CD4-positive, alpha-beta memory T cell (primary cell): ENCODE measurements at regions of chr5 and their contacts with region 1.

Region 1: DNA sequence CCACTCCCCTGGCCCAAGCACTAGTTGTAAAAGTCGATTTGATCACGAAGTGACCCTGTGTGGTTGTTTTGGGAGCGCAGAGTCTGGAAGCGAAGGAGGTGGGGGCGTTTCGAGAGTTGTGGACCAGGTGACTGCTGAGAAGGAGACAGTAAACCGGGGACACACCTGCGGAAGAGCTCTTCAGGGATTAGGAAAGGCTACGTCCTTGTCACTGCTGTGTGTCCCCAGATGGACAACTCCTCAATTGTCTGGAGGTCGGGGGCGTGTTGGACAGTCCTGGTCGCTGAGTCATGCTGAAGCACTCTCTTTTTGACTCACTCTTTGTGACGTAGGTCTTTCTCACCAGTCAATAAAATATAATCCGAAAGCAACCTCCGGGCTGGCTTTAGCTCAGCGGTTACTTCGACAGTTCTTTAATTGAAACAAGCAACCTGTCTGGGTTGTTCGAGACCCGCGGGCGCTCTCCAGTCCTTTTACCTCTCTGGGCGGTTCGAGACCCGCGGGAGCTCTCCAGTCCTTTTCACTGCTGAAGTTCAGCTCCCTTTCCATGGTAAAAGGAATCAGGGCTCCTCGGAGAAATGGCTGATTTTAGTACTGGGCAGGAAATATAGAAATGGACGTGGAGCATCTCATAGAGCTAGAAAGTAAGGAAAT is 10.8 kb downstream of the ZMAT2 start:
- DNase-seq: peak; percentile 86 to 95 (median 93)
- H3K4me3 ChIP-seq: peak overlapping the region; percentile 71 to 92
- H3K4me3 Mint-ChIP-seq: peak overlapping the region; percentile 96 to 100 (median 99)
- H3K27ac ChIP-seq: peak overlapping the region; percentile 82
- H3K27ac Mint-ChIP-seq: peak overlapping the region; percentile 97 to 100 (median 99)
- H3K4me1 ChIP-seq: peaks cover 19% of the 10 kb centered on the region
- H3K4me1 Mint-ChIP-seq: peaks cover 15 to 32% (median 23%) of the 10 kb centered on the region in 4 donors
- H3K27me3 ChIP-seq: no peaks in the 10 kb centered on the region
- H3K27me3 Mint-ChIP-seq: peaks cover 0 to 8% of the 10 kb centered on the region in 2 donors

Region 2: DNA sequence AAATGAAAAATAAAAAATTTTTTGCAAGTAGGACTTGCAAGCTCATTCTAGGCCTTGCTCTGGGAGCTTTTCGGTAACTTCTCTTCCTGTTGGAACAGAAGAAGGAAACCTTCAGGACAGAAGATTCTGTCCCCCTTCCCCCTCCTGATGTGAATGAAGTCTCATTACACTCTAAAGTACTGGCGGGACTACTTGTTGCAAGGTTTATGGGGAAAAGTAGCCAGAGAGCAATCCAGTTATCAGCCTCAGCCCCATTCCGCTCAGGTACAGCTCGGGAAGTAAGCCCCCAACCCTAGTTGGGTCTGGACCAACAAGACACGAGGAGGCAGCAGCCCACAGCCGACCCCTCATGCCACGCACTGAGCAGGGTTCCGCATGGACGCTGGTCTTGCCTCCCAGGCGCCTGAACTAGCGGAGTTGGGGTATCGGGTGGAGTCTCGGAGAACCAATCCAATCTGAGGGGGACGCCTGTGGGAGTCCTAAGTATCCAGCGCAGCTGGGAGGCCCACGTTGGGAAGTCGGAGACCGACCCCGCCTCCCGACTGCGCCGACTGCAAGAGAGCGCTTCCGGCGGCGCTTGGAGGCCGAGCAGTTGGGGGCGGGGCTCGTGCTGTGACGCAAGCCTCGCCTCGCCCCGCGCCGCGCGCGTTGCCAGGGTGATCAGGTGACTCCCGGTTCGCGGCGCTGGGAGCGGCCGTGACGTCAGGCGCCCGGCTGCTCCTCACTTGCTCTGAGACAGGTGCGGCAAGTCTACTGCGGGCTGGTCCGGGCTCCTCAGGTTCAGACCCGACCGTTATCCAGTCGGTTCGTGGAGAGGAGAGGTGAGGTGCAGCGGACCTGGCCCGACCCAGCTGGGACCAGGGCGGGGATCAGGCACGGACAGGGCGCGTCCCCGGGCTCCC is 536.3 kb before region 1 on chr5 and contains the start of gene CYSTM1:
- CTCF ChIA-PET with region 1: no interaction called
- POLR2A ChIA-PET with region 1: no interaction called
- intact Hi-C with region 1: loop called (anchors 2 kb)
- DNase-seq: peak; percentile 94 to 98 (median 97)
- H3K4me3 ChIP-seq: peak within 1 kb of the TSS; percentile 74 to 77
- H3K4me3 Mint-ChIP-seq: peak within 1 kb of the TSS; percentile 91 to 97 (median 93)
- H3K27ac ChIP-seq: peak within 1 kb of the TSS; percentile 89
- H3K27ac Mint-ChIP-seq: peak within 1 kb of the TSS; percentile 92 to 99 (median 98)
- H3K4me1 ChIP-seq: peaks cover 12% of the 10 kb centered on the region
- H3K4me1 Mint-ChIP-seq: peaks cover 7 to 23% (median 11%) of the 10 kb centered on the region in 4 donors
- H3K27me3 ChIP-seq: no peaks in the 10 kb centered on the region
- H3K27me3 Mint-ChIP-seq: no peaks in the 10 kb centered on the region
- total RNA-seq, gene CYSTM1: 5.0 to 6.3 TPM

Region 3: DNA sequence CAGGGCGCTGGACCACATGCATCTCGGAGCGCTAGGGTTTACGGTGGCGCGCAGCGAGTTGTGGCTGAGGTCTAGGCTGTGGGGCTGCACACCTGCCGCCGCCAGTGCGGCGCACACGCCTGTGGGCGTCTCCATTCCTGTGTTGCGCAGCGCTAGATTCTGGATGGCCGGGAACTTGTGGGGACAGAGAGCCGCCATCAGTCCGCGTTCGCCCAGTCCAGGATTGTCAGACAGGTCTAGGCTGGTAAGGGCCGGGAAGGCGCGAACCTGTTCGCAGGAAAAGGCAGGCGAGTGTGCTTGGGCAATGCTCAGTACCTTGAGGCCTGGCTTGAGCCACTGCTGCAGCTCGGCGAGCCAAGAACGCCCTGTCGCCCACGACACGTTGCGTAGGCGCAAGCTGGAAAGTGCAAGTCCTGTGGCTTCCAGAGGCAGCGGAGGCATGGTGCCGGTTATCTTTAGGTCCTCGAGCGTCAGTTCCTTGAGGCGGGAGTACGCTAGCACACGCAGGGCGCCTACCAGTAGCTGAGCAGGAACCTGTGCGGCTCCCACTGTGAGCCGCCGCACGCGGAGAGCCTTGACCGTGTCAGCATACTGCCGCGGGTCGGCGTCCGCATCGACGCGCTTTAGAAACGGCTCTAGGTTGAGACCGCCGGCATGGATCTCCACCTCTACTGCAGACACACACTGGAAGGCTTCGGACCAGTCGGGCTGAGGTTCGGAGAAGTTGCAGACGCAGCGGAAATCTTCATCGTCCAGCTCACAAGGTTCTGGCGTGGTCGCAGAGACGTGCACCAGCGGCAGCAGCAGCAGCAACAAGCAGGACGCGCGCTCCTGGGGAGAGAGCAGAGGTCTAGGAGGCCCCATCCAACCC is 78.6 kb before region 1 on chr5:
- CTCF ChIA-PET with region 1: interaction called, 7 read pairs
- POLR2A ChIA-PET with region 1: interaction called, 16 read pairs
- intact Hi-C with region 1: no loop called
- DNase-seq: peak; percentile 50 to 66 (median 55)
- H3K4me3 ChIP-seq: peak overlapping the region; percentile 61 to 73
- H3K4me3 Mint-ChIP-seq: peak overlapping the region; percentile 90 to 96 (median 90)
- H3K27ac ChIP-seq: peak overlapping the region; percentile 41
- H3K27ac Mint-ChIP-seq: peak overlapping the region; percentile 68 to 93 (median 89)
- H3K4me1 ChIP-seq: peaks cover 13% of the 10 kb centered on the region
- H3K4me1 Mint-ChIP-seq: peaks cover 10 to 30% (median 20%) of the 10 kb centered on the region in 4 donors
- H3K27me3 ChIP-seq: no peaks in the 10 kb centered on the region
- H3K27me3 Mint-ChIP-seq: peaks cover 0 to 2% of the 10 kb centered on the region in 2 donors

Region 4: DNA sequence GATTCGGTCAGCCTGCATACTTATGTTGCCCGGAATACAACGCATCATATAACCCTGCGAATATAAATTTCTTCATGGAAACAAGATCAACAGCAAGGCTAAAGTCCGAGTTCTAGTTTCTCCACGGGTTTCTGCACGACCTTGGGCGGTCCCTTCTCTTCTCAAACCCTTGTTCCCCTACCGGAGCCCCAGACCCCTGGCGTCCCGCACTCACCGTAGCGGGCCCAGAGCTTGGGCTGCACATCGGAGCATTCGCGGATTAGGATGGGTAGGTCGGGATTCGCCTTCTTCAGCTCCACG is 64.0 kb before region 1 on chr5:
- CTCF ChIA-PET with region 1: interaction called, 5 read pairs
- POLR2A ChIA-PET with region 1: interaction called, 61 read pairs
- intact Hi-C with region 1: loop called (anchors 2 kb)
- DNase-seq: no peak
- H3K4me3 ChIP-seq: peak overlapping the region; percentile 63 to 92
- H3K4me3 Mint-ChIP-seq: peak overlapping the region; percentile 97 to 100 (median 100)
- H3K27ac ChIP-seq: peak overlapping the region; percentile 92
- H3K27ac Mint-ChIP-seq: peak overlapping the region; percentile 91 to 100 (median 100)
- H3K4me1 ChIP-seq: peaks cover 40% of the 10 kb centered on the region
- H3K4me1 Mint-ChIP-seq: peaks cover 27 to 70% (median 48%) of the 10 kb centered on the region in 4 donors
- H3K27me3 ChIP-seq: no peaks in the 10 kb centered on the region
- H3K27me3 Mint-ChIP-seq: no peaks in the 10 kb centered on the region

Region 5: DNA sequence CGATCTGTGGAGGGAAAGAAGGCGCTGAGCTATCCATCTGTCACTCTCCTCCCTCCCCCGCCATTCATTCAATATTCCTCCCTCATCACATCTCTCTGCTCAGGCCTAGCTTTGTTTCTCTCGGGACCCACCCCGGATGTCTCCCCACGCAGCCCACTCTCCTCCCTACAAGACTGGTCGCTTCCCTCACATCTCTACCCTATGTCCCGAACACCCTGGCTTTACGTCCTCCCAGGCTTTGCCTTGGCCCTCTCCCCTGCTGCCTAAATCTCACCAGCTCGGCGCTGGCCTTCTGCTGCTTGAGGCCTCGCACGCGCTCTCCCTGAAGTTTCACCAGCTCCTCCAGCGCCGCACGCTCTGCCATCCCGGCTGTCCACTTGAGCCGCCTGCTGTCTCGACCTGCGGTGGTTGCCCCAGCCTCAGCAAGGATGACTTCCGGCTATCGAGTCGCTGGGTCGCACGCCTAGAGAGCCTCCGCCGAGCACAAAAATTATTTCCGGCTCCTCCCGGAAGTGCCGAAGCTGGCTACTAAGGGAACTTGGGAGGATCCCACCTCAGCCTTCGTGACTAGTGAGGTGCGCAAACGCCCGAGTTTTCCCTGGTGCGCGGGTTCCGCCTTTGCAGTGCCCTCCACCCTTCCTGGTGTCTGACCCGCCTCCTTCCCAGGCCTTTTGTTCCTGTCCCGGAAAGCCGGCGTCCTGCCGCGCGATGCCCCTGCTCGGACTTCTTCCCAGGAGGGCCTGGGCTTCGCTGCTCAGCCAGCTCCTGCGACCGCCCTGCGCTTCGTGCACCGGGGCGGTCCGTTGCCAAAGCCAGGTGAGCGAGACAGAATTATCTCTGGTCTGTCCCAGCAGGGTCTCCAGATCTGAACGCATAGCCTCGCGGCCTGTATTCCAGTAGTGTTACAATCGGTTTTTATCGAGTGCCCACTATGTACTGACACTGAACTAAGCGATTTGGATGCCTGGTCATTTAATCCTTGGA is 19.8 kb before region 1 on chr5 and contains the starts of genes HARS1 and HARS2:
- CTCF ChIA-PET with region 1: interaction called, 8 read pairs
- POLR2A ChIA-PET with region 1: interaction called, 68 read pairs
- intact Hi-C with region 1: loop called (anchors 1 kb)
- DNase-seq: peak; percentile 77 to 89 (median 78)
- H3K4me3 ChIP-seq: peak within 1 kb of the TSS; percentile 91
- H3K4me3 Mint-ChIP-seq: peak within 1 kb of the TSS; percentile 97 to 100 (median 99)
- H3K27ac ChIP-seq: peak within 1 kb of the TSS; percentile 83
- H3K27ac Mint-ChIP-seq: peak within 1 kb of the TSS; percentile 97 to 100 (median 98)
- H3K4me1 ChIP-seq: peaks cover 34% of the 10 kb centered on the region
- H3K4me1 Mint-ChIP-seq: peaks cover 23 to 47% (median 37%) of the 10 kb centered on the region in 4 donors
- H3K27me3 ChIP-seq: no peaks in the 10 kb centered on the region
- H3K27me3 Mint-ChIP-seq: no peaks in the 10 kb centered on the region
- total RNA-seq, gene HARS1: 60.7 to 63.5 TPM
- total RNA-seq, gene HARS2: 61.6 to 67.5 TPM

Region 6: DNA sequence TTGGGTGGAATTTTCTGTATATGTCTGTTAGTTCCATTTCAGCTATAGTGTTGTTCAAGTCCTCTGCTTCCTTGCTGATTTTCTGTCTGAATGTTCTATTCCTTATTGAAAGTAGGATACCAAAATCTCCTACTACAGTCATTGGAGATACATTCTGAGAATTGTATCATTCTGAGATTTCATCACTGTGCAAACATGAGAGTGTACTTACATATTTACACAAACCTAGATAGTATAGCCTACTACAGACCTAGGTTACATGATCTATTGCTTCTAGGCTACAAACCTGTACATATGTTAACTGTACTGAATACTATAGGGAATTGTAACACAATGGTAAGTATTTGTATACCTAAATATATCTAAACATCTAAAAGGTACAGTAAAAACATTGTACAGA is 102.1 kb after region 1 on chr5:
- CTCF ChIA-PET with region 1: no interaction called
- POLR2A ChIA-PET with region 1: no interaction called
- intact Hi-C with region 1: no loop called
- DNase-seq: no peak
- H3K4me3 ChIP-seq: no peak overlapping the region
- H3K4me3 Mint-ChIP-seq: no peak overlapping the region
- H3K27ac ChIP-seq: no peak overlapping the region
- H3K27ac Mint-ChIP-seq: no peak overlapping the region
- H3K4me1 ChIP-seq: no peaks in the 10 kb centered on the region
- H3K4me1 Mint-ChIP-seq: no peaks in the 10 kb centered on the region
- H3K27me3 ChIP-seq: no peaks in the 10 kb centered on the region
- H3K27me3 Mint-ChIP-seq: peaks cover 0 to 6% of the 10 kb centered on the region in 2 donors

Region 7: DNA sequence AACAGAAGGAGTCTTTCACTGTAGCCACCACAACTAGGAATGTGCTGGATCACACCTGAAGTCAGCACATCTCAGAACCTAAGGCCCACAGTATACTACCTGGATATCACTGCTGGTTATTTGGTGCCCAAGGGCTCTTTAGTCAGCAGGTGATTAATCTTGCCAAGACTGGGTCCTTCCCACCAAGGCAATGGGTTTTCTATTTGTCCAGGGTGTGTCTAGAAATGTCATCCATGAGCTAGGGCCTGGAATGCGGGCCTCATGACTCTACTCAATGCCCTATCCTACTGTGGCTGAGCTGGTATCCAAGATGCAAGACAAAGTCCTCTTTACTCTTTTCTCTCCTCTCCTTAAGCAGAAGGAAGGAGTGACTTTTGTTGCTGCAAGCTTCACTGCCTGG is 205.3 kb after region 1 on chr5:
- CTCF ChIA-PET with region 1: no interaction called
- POLR2A ChIA-PET with region 1: no interaction called
- intact Hi-C with region 1: no loop called
- DNase-seq: no peak
- H3K4me3 ChIP-seq: no peak overlapping the region
- H3K4me3 Mint-ChIP-seq: no peak overlapping the region
- H3K27ac ChIP-seq: no peak overlapping the region
- H3K27ac Mint-ChIP-seq: no peak overlapping the region
- H3K4me1 ChIP-seq: no peaks in the 10 kb centered on the region
- H3K4me1 Mint-ChIP-seq: no peaks in the 10 kb centered on the region
- H3K27me3 ChIP-seq: no peaks in the 10 kb centered on the region
- H3K27me3 Mint-ChIP-seq: peaks cover 2 to 4% of the 10 kb centered on the region in 2 donors